Right ventricle myocardium inferior (tissue), 1 donor: ENCODE measurements at regions of chr5 and their contacts with region 1.

Region 1: GRCh38 chr5:156326718-156327259 is at the start of gene SGCD:
- DNase-seq: peak; percentile 83
- ATAC-seq: peak; percentile 87
- total RNA-seq, gene SGCD: 75.2 TPM

Region 2: GRCh38 chr5:155728146-155728856 is 598.5 kb before region 1 on chr5:
- intact Hi-C with region 1: loop called (anchors 2 kb)
- DNase-seq: peak; percentile 78
- ATAC-seq: peak; percentile 69

Region 3: GRCh38 chr5:156036640-156037039 is 290.1 kb before region 1 on chr5:
- intact Hi-C with region 1: loop called (anchors 10 kb)
- DNase-seq: no peak
- ATAC-seq: peak; percentile 76

Region 4: DNA sequence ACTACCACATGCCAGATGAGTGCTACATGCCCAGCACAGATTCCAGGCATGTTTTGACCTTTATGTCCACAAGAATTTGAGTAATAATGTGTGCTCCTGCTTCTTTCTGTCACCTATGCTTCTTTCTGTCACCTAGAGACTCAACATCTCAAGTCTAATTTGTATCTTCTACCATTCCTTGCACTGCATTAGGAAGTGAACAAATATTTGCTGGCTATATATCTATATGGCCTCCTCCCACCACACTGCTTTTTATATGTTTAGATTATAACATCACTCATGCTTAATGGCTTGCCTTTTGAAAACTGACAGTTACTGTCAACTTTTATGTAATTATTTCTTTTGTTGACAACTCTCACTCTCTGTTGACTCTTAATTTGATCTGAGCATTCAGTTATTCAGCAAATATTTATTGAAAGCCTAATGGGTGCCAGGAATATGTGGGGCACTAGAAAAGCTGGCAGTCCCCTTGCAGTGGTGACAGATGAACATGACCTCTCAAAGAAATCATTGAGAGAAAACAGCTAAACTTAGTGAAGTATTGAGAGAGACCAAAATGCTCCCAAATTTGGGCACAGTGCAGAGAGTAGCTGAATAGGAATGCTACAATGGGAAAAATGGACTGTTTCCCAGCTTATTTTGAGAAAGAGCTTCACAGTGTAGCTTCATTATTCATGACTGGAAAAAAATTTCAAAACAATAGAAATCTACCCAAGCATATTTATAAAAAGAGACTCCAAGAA is 257.9 kb after region 1 on chr5:
- intact Hi-C with region 1: loop called (anchors 2 kb)
- DNase-seq: no peak
- ATAC-seq: peak; percentile 56

Region 5: GRCh38 chr5:156824800-156825199 is 498.0 kb after region 1 on chr5:
- intact Hi-C with region 1: loop called (anchors 5 kb)
- DNase-seq: no peak
- ATAC-seq: peak; percentile 70